Activated CD4-positive, alpha-beta memory T cell treated with anti-CD3 and anti-CD28 coated beads for 36 hours (primary cell): ENCODE measurements at regions of chr1 and their contacts with region 1.

Region 1: GRCh38 chr1:147890177-147890790 is 12.3 kb upstream of the GJA8 start:
- DNase-seq: peak; percentile 80
- H3K4me3 Mint-ChIP-seq: no peak overlapping the region
- H3K27ac Mint-ChIP-seq: no peak overlapping the region
- H3K4me1 Mint-ChIP-seq: peaks cover 4% of the 10 kb centered on the region
- H3K27me3 Mint-ChIP-seq: no peaks in the 10 kb centered on the region

Region 2: GRCh38 chr1:147389532-147390524 is 500.5 kb before region 1 on chr1:
- CTCF ChIA-PET with region 1: interaction called, 10 read pairs
- POLR2A ChIA-PET with region 1: no interaction called
- intact Hi-C with region 1: no loop called
- DNase-seq: no peak
- H3K4me3 Mint-ChIP-seq: no peak overlapping the region
- H3K27ac Mint-ChIP-seq: no peak overlapping the region
- H3K4me1 Mint-ChIP-seq: peaks cover 2% of the 10 kb centered on the region
- H3K27me3 Mint-ChIP-seq: peaks cover 16% of the 10 kb centered on the region

Region 3: DNA sequence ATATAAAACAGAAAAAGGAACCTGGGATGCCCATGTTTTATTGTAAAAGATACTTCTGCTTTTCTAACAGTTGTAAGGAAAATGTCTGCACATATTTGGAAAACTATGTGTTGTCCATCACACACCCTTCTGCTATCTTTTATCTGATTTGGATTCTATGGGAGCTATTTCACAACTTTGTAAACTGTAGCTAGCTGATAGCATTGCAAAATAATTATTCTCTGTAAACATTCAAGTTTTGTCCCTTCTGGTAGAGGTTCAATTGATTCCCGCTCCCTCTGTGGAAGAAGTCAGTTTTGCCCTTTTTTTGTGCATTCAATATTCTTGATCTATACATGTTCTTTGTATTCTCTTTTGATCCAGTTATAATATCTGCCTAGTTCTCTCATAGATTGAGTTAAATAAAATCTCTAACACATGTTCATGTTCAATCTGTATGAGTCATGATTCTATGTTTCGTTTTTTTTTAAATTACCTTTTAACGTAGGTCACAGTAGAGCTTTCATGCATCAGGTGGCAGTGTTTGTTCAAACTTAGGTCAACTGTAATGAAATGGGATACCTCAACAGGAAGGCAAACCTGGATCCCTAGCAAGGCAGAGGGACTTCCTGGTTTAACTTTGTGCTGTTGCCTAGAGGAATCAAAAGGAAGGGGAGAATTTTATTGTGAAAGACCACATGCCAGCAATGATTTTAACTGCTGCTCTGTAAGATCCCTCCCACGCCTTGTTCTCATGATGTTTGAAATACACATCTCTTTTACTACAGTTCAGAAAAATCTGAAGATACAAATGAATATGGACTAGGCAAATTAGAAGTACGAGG is 375.0 kb before region 1 on chr1:
- CTCF ChIA-PET with region 1: interaction called, 15 read pairs
- POLR2A ChIA-PET with region 1: no interaction called
- intact Hi-C with region 1: loop called (anchors 5 kb)
- DNase-seq: no peak
- H3K4me3 Mint-ChIP-seq: no peak overlapping the region
- H3K27ac Mint-ChIP-seq: no peak overlapping the region
- H3K4me1 Mint-ChIP-seq: peaks cover 15% of the 10 kb centered on the region
- H3K27me3 Mint-ChIP-seq: peaks cover 2% of the 10 kb centered on the region

Region 4: DNA sequence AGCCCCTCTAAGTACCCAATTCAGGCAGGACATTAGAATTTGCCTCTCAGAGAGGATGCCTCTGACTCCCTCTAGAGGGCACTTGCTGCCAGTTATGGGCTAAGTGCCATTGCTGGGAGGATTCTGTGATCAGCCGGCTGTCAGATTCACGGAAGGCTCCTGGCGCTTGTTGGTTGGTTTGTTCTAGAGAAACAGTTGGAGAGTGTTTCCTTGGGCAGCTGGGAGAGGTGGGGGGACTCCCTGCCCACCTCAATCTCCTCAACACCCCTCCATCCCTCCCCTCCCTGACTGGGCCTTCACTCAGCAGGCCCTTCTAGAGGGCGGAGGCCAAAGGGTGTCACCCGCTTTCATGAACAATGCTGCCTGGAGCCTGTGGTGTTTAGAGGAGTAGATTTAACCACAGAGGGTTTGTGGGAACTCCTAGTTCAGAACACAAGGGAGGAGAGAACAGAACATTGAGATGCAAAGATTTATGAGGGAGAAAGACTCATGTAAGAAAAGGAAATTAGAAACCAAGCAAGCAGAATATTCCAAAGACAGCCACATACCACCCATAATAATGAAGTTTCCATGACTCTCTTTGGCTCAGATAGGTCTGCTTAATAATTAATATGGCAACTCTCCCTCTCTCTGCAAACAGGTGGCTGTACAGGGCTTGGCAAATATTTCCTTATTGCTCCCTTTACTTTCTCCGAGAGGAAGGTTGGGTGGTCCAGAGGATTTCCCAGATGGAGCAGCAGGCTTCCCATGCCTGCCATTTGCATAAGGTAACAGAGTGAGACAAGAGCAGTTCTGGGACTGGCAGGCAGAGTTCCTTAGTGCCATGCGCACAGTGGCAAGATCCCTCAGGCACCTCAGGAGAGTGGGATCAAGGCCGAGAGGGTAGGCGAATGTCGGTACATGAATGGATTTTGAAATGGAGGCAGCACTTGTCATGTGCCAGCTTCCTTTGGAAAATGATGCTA is 190.0 kb before region 1 on chr1:
- CTCF ChIA-PET with region 1: interaction called, 12 read pairs
- POLR2A ChIA-PET with region 1: no interaction called
- intact Hi-C with region 1: loop called (anchors 5 kb)
- DNase-seq: peak; percentile 69
- H3K4me3 Mint-ChIP-seq: no peak overlapping the region
- H3K27ac Mint-ChIP-seq: peak overlapping the region; percentile 0
- H3K4me1 Mint-ChIP-seq: peaks cover 7% of the 10 kb centered on the region
- H3K27me3 Mint-ChIP-seq: peaks cover 4% of the 10 kb centered on the region

Region 5: DNA sequence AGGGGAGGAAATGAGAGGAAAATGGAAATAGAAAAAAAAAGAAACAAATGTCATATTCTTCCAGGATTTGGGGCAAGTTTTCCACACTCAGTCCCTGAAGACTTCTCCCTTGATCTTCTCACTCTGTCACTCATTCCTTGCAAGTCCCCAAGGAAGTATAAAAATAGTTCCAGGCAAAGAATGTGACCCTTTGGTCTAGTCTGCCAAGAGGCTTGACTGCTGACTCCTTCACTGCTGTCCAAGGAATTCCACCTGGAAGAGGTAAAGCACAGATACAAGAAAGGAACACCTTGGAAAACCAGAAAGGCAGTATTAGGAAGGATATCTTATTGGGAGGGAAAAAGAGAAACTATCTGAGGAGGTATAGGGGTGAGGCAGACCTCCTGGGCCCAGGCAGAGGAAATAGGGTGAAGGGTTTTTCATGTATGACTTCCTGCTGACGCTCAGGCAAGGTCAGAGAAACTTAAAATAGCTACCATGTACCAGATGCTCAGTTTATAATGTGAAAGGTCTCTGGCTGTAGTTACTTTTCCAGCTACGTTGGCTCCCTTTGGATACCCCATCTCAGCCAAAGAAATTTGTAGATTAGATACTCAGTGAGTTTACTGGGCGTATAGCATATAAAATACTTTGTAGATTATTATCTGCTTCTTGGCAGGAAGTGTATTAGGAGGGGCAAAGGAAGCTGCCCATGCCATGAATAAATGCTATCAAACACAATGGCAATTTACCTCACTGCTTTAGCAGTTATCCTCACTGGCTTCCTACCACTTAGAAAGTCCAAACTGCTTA is 127.9 kb before region 1 on chr1:
- CTCF ChIA-PET with region 1: no interaction called
- POLR2A ChIA-PET with region 1: no interaction called
- intact Hi-C with region 1: loop called (anchors 2 kb)
- DNase-seq: no peak
- H3K4me3 Mint-ChIP-seq: no peak overlapping the region
- H3K27ac Mint-ChIP-seq: peak overlapping the region; percentile 53
- H3K4me1 Mint-ChIP-seq: peaks cover 20% of the 10 kb centered on the region
- H3K27me3 Mint-ChIP-seq: no peaks in the 10 kb centered on the region

Region 6: GRCh38 chr1:147902183-147902845 is 12.0 kb after region 1 on chr1 and contains the start of gene GJA8:
- CTCF ChIA-PET with region 1: interaction called, 23 read pairs
- POLR2A ChIA-PET with region 1: interaction called, 3 read pairs
- intact Hi-C with region 1: no loop called
- DNase-seq: no peak
- H3K4me3 Mint-ChIP-seq: no peak within 1 kb of the TSS
- H3K27ac Mint-ChIP-seq: no peak within 1 kb of the TSS
- H3K4me1 Mint-ChIP-seq: peaks cover 8% of the 10 kb centered on the region
- H3K27me3 Mint-ChIP-seq: no peaks in the 10 kb centered on the region
- total RNA-seq, gene GJA8: not detected